CD4-positive, alpha-beta memory T cell (primary cell): ENCODE measurements at regions of chr1 and their contacts with region 1.

Region 1: GRCh38 chr1:171801487-171801891 is 20.0 kb downstream of the METTL13 start:
- DNase-seq: peak in 2 of 5 donors; percentile 20 to 23
- H3K4me3 ChIP-seq: no peak overlapping the region
- H3K4me3 Mint-ChIP-seq: no peak overlapping the region
- H3K27ac ChIP-seq: no peak overlapping the region
- H3K27ac Mint-ChIP-seq: peak overlapping the region in 1 of 7 donors; percentile 7
- H3K4me1 ChIP-seq: no peaks in the 10 kb centered on the region
- H3K4me1 Mint-ChIP-seq: peaks cover 3 to 8% (median 6%) of the 10 kb centered on the region in 4 donors
- H3K27me3 ChIP-seq: no peaks in the 10 kb centered on the region
- H3K27me3 Mint-ChIP-seq: no peaks in the 10 kb centered on the region

Region 2: DNA sequence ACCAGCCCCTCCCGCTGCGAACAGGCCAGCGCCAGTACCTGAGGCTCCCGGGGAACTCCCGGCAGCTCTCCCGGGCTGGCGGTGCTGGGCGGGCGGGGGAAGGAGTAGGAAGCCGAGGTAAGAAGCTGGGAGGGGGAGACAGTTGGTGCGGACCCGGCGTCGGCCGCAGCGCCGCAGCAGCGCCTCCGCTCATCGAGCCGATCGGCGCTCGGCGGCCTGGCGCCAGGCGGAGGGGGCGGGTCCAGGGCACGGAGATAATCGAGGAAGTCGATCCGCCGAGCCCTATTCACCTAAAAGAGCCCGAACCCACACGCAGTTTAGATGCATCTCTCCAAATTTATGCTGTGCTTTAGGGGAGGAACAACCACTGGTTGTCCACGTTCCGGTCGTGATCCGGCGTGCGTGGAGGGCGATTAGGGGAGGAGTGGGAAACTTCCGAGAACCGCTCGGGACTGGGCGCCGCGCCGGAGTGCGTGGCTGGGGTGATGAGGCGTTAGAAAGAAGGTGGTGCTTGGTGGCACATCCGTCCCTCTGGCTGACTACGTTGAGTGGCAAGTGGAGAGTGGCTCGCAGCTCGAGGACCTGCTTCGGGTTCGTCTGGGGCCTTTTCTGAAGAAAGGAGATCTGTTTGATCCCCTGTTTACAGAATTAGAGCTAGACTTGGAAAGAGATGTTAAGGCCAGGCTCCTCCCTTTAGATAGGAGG is 59.5 kb before region 1 on chr1 and contains the start of gene VAMP4:
- CTCF ChIA-PET with region 1: interaction called, 4 read pairs
- POLR2A ChIA-PET with region 1: interaction called, 19 read pairs
- intact Hi-C with region 1: no loop called
- DNase-seq: peak; percentile 85 to 90 (median 89)
- H3K4me3 ChIP-seq: peak within 1 kb of the TSS; percentile 84 to 92
- H3K4me3 Mint-ChIP-seq: peak within 1 kb of the TSS; percentile 97 to 100 (median 100)
- H3K27ac ChIP-seq: peak within 1 kb of the TSS; percentile 96
- H3K27ac Mint-ChIP-seq: peak within 1 kb of the TSS; percentile 98 to 100 (median 99)
- H3K4me1 ChIP-seq: peaks cover 44% of the 10 kb centered on the region
- H3K4me1 Mint-ChIP-seq: peaks cover 31 to 62% (median 48%) of the 10 kb centered on the region in 4 donors
- H3K27me3 ChIP-seq: no peaks in the 10 kb centered on the region
- H3K27me3 Mint-ChIP-seq: no peaks in the 10 kb centered on the region
- total RNA-seq, gene VAMP4: 29.4 to 32.0 TPM

Region 3: DNA sequence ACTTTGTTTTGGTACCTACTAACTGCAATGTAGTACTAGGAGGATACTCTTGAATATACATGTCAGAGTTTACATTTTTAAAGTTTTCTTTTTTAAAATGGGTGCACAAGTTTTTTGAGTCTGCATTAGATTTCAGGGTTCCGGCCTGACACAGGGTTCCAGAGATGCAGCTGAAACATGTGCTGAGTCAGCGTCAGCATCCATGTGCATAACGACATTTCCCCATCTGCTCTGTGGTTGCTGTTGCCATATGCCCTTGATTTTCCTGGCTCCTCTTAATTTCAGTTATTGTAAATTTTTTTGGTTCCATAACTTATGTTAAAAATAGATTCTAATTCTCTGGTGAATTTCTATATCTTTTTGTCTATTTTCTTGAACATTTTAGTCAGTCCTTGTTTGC is 32.3 kb before region 1 on chr1:
- CTCF ChIA-PET with region 1: no interaction called
- POLR2A ChIA-PET with region 1: no interaction called
- intact Hi-C with region 1: no loop called
- DNase-seq: no peak
- H3K4me3 ChIP-seq: no peak overlapping the region
- H3K4me3 Mint-ChIP-seq: no peak overlapping the region
- H3K27ac ChIP-seq: no peak overlapping the region
- H3K27ac Mint-ChIP-seq: no peak overlapping the region
- H3K4me1 ChIP-seq: no peaks in the 10 kb centered on the region
- H3K4me1 Mint-ChIP-seq: no peaks in the 10 kb centered on the region
- H3K27me3 ChIP-seq: peaks cover 3% of the 10 kb centered on the region
- H3K27me3 Mint-ChIP-seq: peaks cover 15 to 18% of the 10 kb centered on the region in 2 donors

Region 4: GRCh38 chr1:171811672-171812071 is 10.2 kb after region 1 on chr1:
- CTCF ChIA-PET with region 1: interaction called, 10 read pairs
- POLR2A ChIA-PET with region 1: no interaction called
- intact Hi-C with region 1: no loop called
- DNase-seq: no peak
- H3K4me3 ChIP-seq: no peak overlapping the region
- H3K4me3 Mint-ChIP-seq: no peak overlapping the region
- H3K27ac ChIP-seq: no peak overlapping the region
- H3K27ac Mint-ChIP-seq: no peak overlapping the region
- H3K4me1 ChIP-seq: no peaks in the 10 kb centered on the region
- H3K4me1 Mint-ChIP-seq: peaks cover 0 to 2% (median 1%) of the 10 kb centered on the region in 4 donors
- H3K27me3 ChIP-seq: no peaks in the 10 kb centered on the region
- H3K27me3 Mint-ChIP-seq: no peaks in the 10 kb centered on the region

Region 5: DNA sequence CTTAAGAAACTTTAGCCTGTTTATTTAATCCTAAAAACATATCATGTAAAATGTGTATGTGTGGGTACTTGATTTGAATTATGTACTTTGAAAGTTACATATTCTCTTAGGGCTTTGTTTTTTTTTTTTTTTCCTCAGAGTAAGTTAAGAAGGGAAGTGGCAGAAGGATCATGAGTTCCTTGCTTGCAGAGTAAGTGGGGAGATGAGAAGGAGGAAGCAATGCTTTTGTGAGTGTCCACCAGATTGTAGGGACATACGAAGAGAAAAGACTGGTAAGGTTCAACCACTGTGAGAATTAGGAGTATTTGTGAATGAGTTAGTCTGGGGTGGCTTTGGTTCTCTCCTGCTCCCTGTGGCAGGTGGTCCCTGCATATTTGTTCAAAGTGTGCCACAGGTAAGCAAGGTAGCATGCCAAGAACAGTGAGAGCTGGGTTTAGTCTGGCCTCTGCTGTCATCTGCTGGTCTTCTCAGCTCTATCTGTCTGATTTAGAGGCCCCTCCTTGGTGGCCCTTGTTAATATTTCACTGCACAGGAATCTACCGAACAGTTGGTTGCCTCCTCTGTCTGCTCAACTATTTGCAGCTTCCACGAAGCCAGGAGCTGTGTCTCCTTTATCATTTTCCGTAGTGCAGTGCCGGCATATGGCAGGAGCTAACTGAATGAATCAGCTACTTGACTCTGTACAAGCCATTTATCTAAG is 49.3 kb after region 1 on chr1:
- CTCF ChIA-PET with region 1: no interaction called
- POLR2A ChIA-PET with region 1: no interaction called
- intact Hi-C with region 1: no loop called
- DNase-seq: no peak
- H3K4me3 ChIP-seq: no peak overlapping the region
- H3K4me3 Mint-ChIP-seq: no peak overlapping the region
- H3K27ac ChIP-seq: no peak overlapping the region
- H3K27ac Mint-ChIP-seq: no peak overlapping the region
- H3K4me1 ChIP-seq: no peaks in the 10 kb centered on the region
- H3K4me1 Mint-ChIP-seq: no peaks in the 10 kb centered on the region
- H3K27me3 ChIP-seq: no peaks in the 10 kb centered on the region
- H3K27me3 Mint-ChIP-seq: peaks cover 2 to 8% of the 10 kb centered on the region in 2 donors

Region 6: DNA sequence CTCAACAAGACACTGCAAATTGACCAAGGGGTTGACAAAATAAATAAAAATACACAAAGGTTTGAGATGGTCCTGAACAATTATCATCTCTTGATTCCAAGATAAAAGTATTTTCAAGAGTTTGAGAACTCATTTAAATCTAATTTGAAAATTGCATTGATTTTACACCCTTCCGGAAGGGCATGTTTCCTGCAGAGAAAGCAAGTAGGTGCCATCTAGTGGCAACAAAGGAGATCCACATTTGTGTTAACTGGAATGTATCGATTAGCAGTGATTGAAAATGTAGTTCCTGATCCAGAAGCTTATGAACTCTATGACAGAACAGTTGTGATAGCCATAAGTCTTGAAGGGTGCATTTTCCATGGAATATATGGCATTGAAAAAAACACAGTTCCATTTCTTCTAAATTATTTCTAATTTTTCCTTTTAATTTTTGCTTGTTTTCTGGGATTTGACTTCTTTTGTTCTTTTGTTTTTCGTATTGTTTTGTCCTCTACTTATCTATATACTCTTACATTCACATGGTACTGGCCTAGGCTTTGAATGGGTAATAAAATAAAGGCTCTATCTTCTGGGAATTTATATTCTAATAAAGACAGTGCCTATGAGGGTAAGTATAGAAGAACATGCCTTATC is 183.5 kb after region 1 on chr1:
- CTCF ChIA-PET with region 1: interaction called, 162 read pairs
- POLR2A ChIA-PET with region 1: no interaction called
- intact Hi-C with region 1: loop called (anchors 1 kb)
- DNase-seq: peak in 4 of 5 donors; percentile 46 to 55 (median 49)
- H3K4me3 ChIP-seq: no peak overlapping the region
- H3K4me3 Mint-ChIP-seq: no peak overlapping the region
- H3K27ac ChIP-seq: no peak overlapping the region
- H3K27ac Mint-ChIP-seq: no peak overlapping the region
- H3K4me1 ChIP-seq: no peaks in the 10 kb centered on the region
- H3K4me1 Mint-ChIP-seq: no peaks in the 10 kb centered on the region
- H3K27me3 ChIP-seq: no peaks in the 10 kb centered on the region
- H3K27me3 Mint-ChIP-seq: peaks cover 0 to 5% of the 10 kb centered on the region in 2 donors